ENCODE measurements at regions of chr7 and their contacts with region 1.

Region 1: GRCh38 chr7:75642810-75643486 is 95.8 kb downstream of the HIP1 start:
- DNase-seq: peak in 1 of 2 experiments; percentile 85
- H3K4me3 ChIP-seq: no peak overlapping the region
- H3K27ac ChIP-seq: no peak overlapping the region; the same call in 1 of the 2 replicates
- H3K4me1 ChIP-seq: peaks cover 0 to 11% (median 6%) of the 10 kb centered on the region in 4 experiments; a peak in 6 of 7 replicates
- H3K27me3 ChIP-seq: no peaks in the 10 kb centered on the region
- CTCF ChIP-seq: peak; percentile 83 to 97 (median 83)
- EP300 ChIP-seq: no peak
- POLR2A ChIP-seq: no peak
- RAD21 ChIP-seq: peak; percentile 94 to 95

Region 2: GRCh38 chr7:75596727-75597614 is 46.0 kb before region 1 on chr7:
- CTCF ChIA-PET with region 1: interaction called, 5 read pairs
- POLR2A ChIA-PET with region 1: interaction called, 12 read pairs
- DNase-seq: no peak
- H3K4me3 ChIP-seq: no peak overlapping the region
- H3K27ac ChIP-seq: no peak overlapping the region
- H3K4me1 ChIP-seq: peaks cover 0 to 18% (median 10%) of the 10 kb centered on the region in 4 experiments; a peak in 6 of 7 replicates
- H3K27me3 ChIP-seq: no peaks in the 10 kb centered on the region
- CTCF ChIP-seq: no peak
- EP300 ChIP-seq: no peak
- POLR2A ChIP-seq: no peak
- RAD21 ChIP-seq: no peak

Region 3: DNA sequence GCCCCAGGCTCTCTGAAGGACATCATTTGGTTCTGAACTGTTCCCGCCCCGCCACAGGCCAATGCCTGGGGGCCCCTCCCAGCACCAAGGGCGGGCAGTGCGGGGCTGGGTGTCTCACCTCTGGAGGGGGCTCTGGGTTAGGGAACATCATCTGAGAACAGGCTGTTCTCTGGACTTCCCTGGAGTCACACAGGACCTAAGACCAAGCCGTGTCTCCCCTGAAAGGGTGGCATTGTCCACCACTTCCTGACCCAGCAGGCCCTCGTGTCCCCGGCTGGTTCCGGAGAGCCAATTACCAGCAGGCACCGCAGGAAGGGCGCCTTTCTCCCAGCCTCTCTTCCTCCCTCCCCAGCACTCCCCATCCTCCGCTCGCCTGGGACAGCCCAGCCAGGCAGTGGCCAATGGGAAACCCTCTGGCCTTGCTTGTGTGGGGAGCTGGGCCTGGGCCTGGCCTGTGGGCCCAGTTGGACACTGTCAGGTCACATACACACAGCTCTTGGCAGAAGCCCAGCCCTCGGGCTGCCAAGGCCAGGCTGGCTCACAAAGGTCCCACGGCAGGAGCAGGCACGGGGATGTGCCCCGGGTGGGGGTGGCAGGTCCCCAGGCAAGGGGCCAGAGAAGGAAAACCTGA is 31.3 kb before region 1 on chr7:
- CTCF ChIA-PET with region 1: interaction called, 4 read pairs
- POLR2A ChIA-PET with region 1: interaction called, 122 read pairs
- DNase-seq: peak in 1 of 2 experiments; percentile 68
- H3K4me3 ChIP-seq: no peak overlapping the region
- H3K27ac ChIP-seq: no peak overlapping the region; the same call in 1 of the 2 replicates
- H3K4me1 ChIP-seq: peaks cover 0 to 11% (median 5%) of the 10 kb centered on the region in 4 experiments; a peak in 4 of 7 replicates
- H3K27me3 ChIP-seq: no peaks in the 10 kb centered on the region
- CTCF ChIP-seq: no peak
- EP300 ChIP-seq: no peak
- POLR2A ChIP-seq: no peak
- RAD21 ChIP-seq: no peak; a peak in 1 of 4 replicates

Region 4: GRCh38 chr7:75617634-75618234 is 25.2 kb before region 1 on chr7:
- CTCF ChIA-PET with region 1: interaction called, 6 read pairs
- POLR2A ChIA-PET with region 1: interaction called, 122 read pairs
- DNase-seq: no peak
- H3K4me3 ChIP-seq: no peak overlapping the region
- H3K27ac ChIP-seq: no peak overlapping the region
- H3K4me1 ChIP-seq: peaks cover 0 to 2% (median 0%) of the 10 kb centered on the region in 4 experiments; a peak in 2 of 7 replicates
- H3K27me3 ChIP-seq: no peaks in the 10 kb centered on the region
- CTCF ChIP-seq: no peak
- EP300 ChIP-seq: no peak
- POLR2A ChIP-seq: no peak
- RAD21 ChIP-seq: no peak

Region 5: DNA sequence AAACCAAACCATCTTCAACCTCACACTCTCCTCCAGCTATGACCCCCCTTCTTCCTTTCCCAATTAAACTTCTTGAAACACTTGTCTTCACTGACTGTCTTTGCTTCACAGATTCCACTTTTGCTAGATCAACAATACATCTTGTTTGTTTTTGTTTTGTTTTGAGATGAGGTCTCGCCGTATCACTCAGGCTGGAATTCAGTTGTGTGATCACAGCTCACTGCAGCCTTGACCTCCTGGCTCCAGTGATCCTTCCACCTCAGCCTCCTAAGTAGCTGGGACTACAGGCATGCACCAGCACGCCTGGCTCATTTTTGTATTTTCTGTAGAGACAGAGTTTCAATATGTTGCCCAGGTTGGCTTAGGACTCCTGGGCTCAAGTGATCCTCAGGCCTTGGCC is 36.1 kb after region 1 on chr7:
- CTCF ChIA-PET with region 1: no interaction called
- POLR2A ChIA-PET with region 1: no interaction called
- DNase-seq: no peak
- H3K4me3 ChIP-seq: no peak overlapping the region
- H3K27ac ChIP-seq: no peak overlapping the region
- H3K4me1 ChIP-seq: no peaks in the 10 kb centered on the region
- H3K27me3 ChIP-seq: no peaks in the 10 kb centered on the region
- CTCF ChIP-seq: no peak
- EP300 ChIP-seq: no peak
- POLR2A ChIP-seq: no peak
- RAD21 ChIP-seq: no peak